Right cardiac atrium (tissue), 5 donors: ENCODE measurements at regions of chr19 and their contacts with region 1.

Region 1: GRCh38 chr19:6297202-6297601 is 17.4 kb upstream of the MLLT1 start:
- DNase-seq: no peak
- ATAC-seq: no peak
- H3K4me3 ChIP-seq: no peak overlapping the region
- H3K27ac ChIP-seq: no peak overlapping the region
- H3K4me1 ChIP-seq: no peaks in the 10 kb centered on the region
- H3K27me3 ChIP-seq: no peaks in the 10 kb centered on the region

Region 2: DNA sequence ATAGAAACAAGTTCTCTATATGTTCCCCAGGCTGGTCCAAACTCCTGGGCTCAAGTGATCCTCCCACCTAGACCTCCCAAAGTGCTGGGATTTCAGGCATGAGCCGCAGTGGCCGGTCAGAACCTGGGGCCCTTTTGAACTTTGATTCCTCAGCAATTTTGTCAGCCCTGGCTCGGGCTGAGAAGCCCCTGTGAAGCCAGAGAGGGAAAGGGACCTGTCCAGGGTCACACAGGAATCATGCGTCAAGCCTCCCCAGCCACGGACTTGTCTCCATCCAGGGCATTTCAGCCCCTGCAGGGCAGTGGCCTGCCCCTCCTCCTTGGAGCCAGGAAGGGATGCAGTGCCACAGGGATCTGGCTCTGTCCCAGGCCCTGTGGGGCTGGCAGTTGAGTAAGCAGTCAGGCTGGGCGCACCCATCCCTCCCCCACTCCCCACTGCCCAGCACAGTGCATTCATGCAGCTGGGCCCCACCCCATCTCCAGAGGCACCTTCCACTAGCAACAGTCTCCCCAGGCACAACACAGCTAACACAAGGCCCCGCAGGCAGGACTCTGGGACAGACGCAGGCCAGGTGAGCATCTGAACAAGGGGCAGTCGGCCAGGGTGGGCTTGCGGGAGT is 383.4 kb before region 1 on chr19 and contains the start of gene CAPS:
- intact Hi-C with region 1: no loop called
- DNase-seq: peak; percentile 71 to 84 (median 79)
- ATAC-seq: peak; percentile 61 to 68
- H3K4me3 ChIP-seq: no peak within 1 kb of the TSS
- H3K27ac ChIP-seq: peak within 1 kb of the TSS; percentile 11
- H3K4me1 ChIP-seq: peaks cover 5% of the 10 kb centered on the region
- H3K27me3 ChIP-seq: no peaks in the 10 kb centered on the region
- total RNA-seq, gene CAPS: 8.9 to 14.2 (median 9.9) TPM

Region 3: GRCh38 chr19:6161271-6161850 is 135.8 kb before region 1 on chr19:
- intact Hi-C with region 1: loop called in 3 of 4 experiments (anchors 5 to 10 kb)
- DNase-seq: peak; percentile 50 to 65 (median 56)
- ATAC-seq: peak; percentile 41 to 93
- H3K4me3 ChIP-seq: no peak overlapping the region
- H3K27ac ChIP-seq: no peak overlapping the region
- H3K4me1 ChIP-seq: no peaks in the 10 kb centered on the region
- H3K27me3 ChIP-seq: no peaks in the 10 kb centered on the region

Region 4: GRCh38 chr19:6218491-6219162 is 78.6 kb before region 1 on chr19:
- intact Hi-C with region 1: loop called (anchors 2 to 5 kb)
- DNase-seq: peak; percentile 91 to 97 (median 96)
- ATAC-seq: peak; percentile 60 to 74
- H3K4me3 ChIP-seq: no peak overlapping the region
- H3K27ac ChIP-seq: no peak overlapping the region
- H3K4me1 ChIP-seq: peaks cover 28% of the 10 kb centered on the region
- H3K27me3 ChIP-seq: no peaks in the 10 kb centered on the region

Region 5: DNA sequence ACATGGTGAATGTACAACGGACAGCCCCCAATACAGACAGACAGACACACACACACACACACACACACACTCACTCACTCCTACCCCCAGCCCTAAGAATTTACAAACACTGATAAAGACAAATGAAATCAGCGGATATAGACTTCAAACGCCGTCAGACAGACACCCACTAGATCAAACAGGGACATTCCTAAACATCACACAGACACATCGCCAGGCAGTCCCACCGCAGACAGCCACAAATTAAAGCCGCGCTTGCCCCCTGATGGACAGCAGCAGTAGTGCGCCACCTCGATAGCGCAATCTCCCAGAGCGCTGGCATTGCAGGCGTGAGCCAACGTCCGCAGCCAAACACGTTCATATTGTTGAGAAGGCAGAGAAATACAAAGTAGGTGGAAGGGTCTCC is 565.5 kb after region 1 on chr19:
- intact Hi-C with region 1: no loop called
- DNase-seq: peak; percentile 80 to 91 (median 90)
- ATAC-seq: peak; percentile 90 to 95
- H3K4me3 ChIP-seq: peak overlapping the region; percentile 27
- H3K27ac ChIP-seq: no peak overlapping the region
- H3K4me1 ChIP-seq: no peaks in the 10 kb centered on the region
- H3K27me3 ChIP-seq: no peaks in the 10 kb centered on the region